IMR-90 (cell line): ENCODE measurements at regions of chr2 and their contacts with region 1.

Region 1: DNA sequence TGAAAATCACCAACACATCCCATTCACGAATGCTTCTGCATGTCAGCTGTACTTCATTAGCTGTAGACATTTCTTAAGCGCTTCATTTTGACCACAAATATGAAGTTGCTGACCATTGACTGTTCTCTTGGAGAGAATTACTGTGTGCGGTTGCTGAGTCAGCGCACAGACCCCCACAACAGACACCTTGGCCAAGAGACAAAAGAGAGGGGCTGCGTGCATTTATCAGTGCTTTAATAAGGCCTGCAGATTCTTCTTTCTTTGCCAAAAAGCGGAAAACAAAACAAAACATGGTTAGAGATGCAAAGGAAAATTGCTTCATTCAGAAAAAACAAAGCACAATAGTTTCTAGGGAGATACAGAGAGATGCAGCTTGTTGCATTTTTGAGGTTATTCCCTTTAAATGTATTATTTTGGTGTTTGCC is 174.7 kb downstream of the ACKR3 start:
- DNase-seq: peak; percentile 74
- ATAC-seq: peak; percentile 75
- H3K4me3 ChIP-seq: no peak overlapping the region
- H3K27ac ChIP-seq: no peak overlapping the region
- H3K4me1 ChIP-seq: peaks cover 7% of the 10 kb centered on the region
- H3K27me3 ChIP-seq: peaks cover 26% of the 10 kb centered on the region
- CTCF ChIP-seq: no peak
- POLR2A ChIP-seq: no peak
- RAD21 ChIP-seq: no peak

Region 2: DNA sequence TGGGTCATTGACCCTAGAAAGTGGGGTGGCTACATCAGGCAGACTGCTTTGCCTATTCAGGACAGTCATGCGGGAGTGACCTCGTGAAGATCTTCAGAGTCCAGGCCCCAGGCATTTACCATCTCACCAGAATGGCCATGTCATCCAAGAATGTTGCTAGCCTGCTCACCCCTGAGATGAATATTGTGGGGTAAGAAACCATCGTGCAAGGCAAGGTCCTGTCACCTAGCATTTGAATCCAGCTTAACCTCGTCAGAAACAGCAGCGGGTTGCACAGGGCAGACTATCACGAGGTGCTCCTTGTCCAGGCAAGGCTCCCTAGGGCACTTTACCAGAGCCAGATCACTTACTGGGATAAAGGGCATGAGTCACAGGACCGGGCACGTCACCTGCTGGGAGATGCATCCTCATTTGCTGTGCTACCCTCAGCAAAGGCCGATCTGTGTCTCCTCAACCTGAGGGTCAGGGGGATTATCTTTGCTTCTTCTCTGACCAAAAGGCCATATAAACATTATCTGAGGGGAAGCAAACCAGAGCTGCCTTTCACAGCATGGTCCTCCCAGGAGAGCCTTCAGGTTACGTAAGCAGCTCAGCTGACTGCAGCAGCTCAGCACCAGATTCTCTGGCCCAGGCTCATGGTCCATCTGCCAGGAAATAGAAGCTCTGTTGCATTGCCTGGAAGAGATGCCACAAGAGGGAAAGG is 12.3 kb before region 1 on chr2:
- CTCF ChIA-PET with region 1: no interaction called
- POLR2A ChIA-PET with region 1: no interaction called
- dilution Hi-C with region 1: no loop called
- in situ Hi-C with region 1: no loop called
- intact Hi-C with region 1: loop called (anchors 1 kb)
- DNase-seq: peak; percentile 5
- ATAC-seq: peak; percentile 27; the same call in 1 of the 2 replicates
- H3K4me3 ChIP-seq: no peak overlapping the region
- H3K27ac ChIP-seq: no peak overlapping the region
- H3K4me1 ChIP-seq: peaks cover 3% of the 10 kb centered on the region; the same call in 1 of the 2 replicates
- H3K27me3 ChIP-seq: peaks cover 22% of the 10 kb centered on the region
- CTCF ChIP-seq: no peak
- POLR2A ChIP-seq: no peak
- RAD21 ChIP-seq: no peak

Region 3: DNA sequence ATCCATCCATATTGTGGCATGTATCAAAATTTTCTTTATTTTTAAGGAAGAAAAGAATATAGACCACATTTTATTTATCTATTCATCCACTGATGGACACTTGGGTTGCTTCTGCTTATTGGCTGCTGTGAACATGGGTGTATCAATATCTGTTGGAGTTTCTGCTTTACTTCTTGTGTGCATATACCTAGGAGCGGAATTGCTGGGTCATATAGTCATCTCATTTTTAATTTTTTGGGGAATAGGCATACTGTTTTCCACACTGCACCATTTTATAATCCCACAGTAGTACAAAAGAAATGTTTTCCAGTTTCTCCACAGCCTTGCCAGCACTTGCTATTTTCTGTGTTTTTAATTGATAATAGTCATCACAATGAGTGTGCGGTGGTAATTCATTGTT is 22.6 kb after region 1 on chr2:
- CTCF ChIA-PET with region 1: no interaction called
- POLR2A ChIA-PET with region 1: no interaction called
- dilution Hi-C with region 1: no loop called
- in situ Hi-C with region 1: no loop called
- intact Hi-C with region 1: no loop called
- DNase-seq: no peak
- ATAC-seq: no peak
- H3K4me3 ChIP-seq: no peak overlapping the region
- H3K27ac ChIP-seq: no peak overlapping the region
- H3K4me1 ChIP-seq: no peaks in the 10 kb centered on the region
- H3K27me3 ChIP-seq: peaks cover 3% of the 10 kb centered on the region
- CTCF ChIP-seq: no peak
- POLR2A ChIP-seq: no peak
- RAD21 ChIP-seq: no peak